ENCODE measurements at regions of chr1 and their contacts with region 1.

Region 1: GRCh38 chr1:63327417-63328139 is 5.2 kb downstream of the FOXD3 start:
- DNase-seq: peak; percentile 74
- H3K4me3 Mint-ChIP-seq: no peak overlapping the region
- H3K27ac Mint-ChIP-seq: no peak overlapping the region
- H3K4me1 Mint-ChIP-seq: peaks cover 26% of the 10 kb centered on the region
- H3K27me3 Mint-ChIP-seq: peaks cover 68% of the 10 kb centered on the region

Region 2: DNA sequence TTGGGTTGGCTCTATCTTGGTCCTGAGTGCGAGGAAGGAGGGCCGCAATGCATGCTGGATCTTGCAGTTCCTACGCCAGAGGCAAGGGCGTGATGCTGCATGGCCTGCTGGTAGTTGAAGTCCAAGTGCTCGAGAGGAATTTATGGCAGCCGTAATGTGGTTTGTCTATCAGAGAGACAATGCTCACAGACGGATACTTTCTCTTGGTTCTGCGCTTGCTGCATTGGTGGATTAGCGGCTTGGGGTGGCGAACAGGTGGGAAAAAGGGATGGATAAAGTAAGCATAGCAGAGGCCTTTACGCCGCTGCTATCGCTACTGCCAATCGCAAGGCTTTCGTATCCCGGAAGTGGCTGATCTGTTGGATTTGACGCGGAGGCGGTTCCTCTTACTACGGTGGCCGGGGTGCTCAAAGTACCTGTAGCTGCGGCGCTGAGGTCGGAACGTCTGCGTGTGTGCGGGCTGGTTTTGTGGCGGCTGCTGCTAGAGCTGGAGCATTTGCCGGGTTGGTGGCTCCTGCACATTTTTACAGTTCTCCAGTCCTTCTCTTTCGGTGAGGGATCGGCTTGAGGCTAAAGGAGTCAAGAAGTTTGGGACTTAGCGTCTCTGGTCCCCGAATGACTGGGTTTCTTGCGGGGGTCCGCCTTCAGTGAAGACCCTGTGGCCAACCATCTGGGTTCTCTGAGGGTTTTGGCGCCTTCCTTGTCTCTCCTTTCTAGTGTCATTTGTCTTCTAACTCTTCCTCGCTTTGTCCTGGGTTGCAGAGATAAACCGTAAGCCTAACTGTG is 543.7 kb before region 1 on chr1 and contains the start of gene ATG4C:
- CTCF ChIA-PET with region 1: no interaction called
- intact Hi-C with region 1: loop called (anchors 2 kb)
- DNase-seq: peak; percentile 96
- H3K4me3 Mint-ChIP-seq: no peak within 1 kb of the TSS
- H3K27ac Mint-ChIP-seq: no peak within 1 kb of the TSS
- H3K4me1 Mint-ChIP-seq: peaks cover 13% of the 10 kb centered on the region
- H3K27me3 Mint-ChIP-seq: peaks cover 7% of the 10 kb centered on the region
- total RNA-seq, gene ATG4C: 13.4 to 15.1 TPM

Region 3: GRCh38 chr1:62841587-62842169 is 485.9 kb before region 1 on chr1:
- CTCF ChIA-PET with region 1: no interaction called
- intact Hi-C with region 1: loop called (anchors 10 kb)
- DNase-seq: peak; percentile 7
- H3K4me3 Mint-ChIP-seq: no peak overlapping the region
- H3K27ac Mint-ChIP-seq: no peak overlapping the region
- H3K4me1 Mint-ChIP-seq: no peaks in the 10 kb centered on the region
- H3K27me3 Mint-ChIP-seq: no peaks in the 10 kb centered on the region

Region 4: GRCh38 chr1:63316984-63317816 is 10.4 kb before region 1 on chr1:
- CTCF ChIA-PET with region 1: interaction called, 12 read pairs
- intact Hi-C with region 1: loop called (anchors 1 kb)
- DNase-seq: peak; percentile 67
- H3K4me3 Mint-ChIP-seq: peak overlapping the region; percentile 63
- H3K27ac Mint-ChIP-seq: no peak overlapping the region
- H3K4me1 Mint-ChIP-seq: peaks cover 38% of the 10 kb centered on the region
- H3K27me3 Mint-ChIP-seq: peaks cover 69% of the 10 kb centered on the region

Region 5: DNA sequence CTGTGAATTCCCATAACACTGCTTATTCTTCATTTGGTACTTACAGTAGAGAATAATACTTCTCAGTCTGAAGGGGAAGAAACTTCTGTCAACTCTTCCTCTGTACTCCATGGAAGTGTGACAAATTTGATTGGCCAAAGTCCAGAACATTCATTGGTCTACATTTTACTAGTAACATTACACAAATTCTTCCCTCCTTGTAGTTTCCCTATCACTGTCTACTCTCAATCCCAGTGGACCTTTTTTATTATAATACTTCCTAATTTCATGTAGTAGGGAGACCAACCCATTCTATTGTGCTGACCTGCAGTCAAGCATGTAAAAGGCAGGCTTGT is 114.5 kb after region 1 on chr1:
- CTCF ChIA-PET with region 1: interaction called, 3 read pairs
- intact Hi-C with region 1: loop called (anchors 1 kb)
- DNase-seq: no peak
- H3K4me3 Mint-ChIP-seq: no peak overlapping the region
- H3K27ac Mint-ChIP-seq: no peak overlapping the region
- H3K4me1 Mint-ChIP-seq: no peaks in the 10 kb centered on the region
- H3K27me3 Mint-ChIP-seq: no peaks in the 10 kb centered on the region

Region 6: GRCh38 chr1:63480057-63480456 is 152.5 kb after region 1 on chr1:
- CTCF ChIA-PET with region 1: no interaction called
- intact Hi-C with region 1: no loop called
- DNase-seq: no peak
- H3K4me3 Mint-ChIP-seq: no peak overlapping the region
- H3K27ac Mint-ChIP-seq: no peak overlapping the region
- H3K4me1 Mint-ChIP-seq: no peaks in the 10 kb centered on the region
- H3K27me3 Mint-ChIP-seq: no peaks in the 10 kb centered on the region

Region 7: GRCh38 chr1:63537940-63538339 is 210.4 kb after region 1 on chr1:
- CTCF ChIA-PET with region 1: interaction called, 3 read pairs
- intact Hi-C with region 1: loop called (anchors 2 kb)
- DNase-seq: no peak
- H3K4me3 Mint-ChIP-seq: no peak overlapping the region
- H3K27ac Mint-ChIP-seq: no peak overlapping the region
- H3K4me1 Mint-ChIP-seq: no peaks in the 10 kb centered on the region
- H3K27me3 Mint-ChIP-seq: no peaks in the 10 kb centered on the region

Region 8: DNA sequence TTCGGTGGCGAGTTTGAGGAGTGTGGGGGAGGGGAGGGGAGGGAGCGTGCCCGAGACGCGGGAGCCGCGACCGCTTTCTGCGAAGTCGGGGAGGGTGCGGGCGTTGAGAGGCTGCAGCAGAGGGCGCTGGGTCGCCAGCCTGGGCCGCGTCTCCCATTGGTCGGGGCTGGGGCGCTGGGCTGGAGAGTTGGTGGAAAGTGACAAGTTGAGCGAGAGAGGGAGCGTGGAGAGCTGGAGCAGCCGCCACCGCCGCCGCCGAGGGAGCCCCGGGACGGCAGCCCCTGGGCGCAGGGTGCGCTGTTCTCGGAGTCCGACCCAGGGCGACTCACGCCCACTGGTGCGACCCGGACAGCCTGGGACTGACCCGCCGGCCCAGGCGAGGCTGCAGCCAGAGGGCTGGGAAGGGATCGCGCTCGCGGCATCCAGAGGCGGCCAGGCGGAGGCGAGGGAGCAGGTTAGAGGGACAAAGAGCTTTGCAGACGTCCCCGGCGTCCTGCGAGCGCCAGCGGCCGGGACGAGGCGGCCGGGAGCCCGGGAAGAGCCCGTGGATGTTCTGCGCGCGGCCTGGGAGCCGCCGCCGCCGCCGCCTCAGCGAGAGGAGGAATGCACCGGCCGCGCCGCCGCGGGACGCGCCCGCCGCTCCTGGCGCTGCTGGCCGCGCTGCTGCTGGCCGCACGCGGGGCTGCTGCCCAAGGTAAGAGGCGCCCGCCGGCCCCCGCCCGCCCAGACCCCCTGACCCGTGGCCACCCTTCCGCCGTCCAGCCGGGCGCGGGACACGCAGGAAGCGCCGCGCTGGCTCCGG is 446.4 kb after region 1 on chr1 and contains the start of gene ROR1:
- CTCF ChIA-PET with region 1: no interaction called
- intact Hi-C with region 1: loop called (anchors 10 kb)
- DNase-seq: peak; percentile 87
- H3K4me3 Mint-ChIP-seq: peak within 1 kb of the TSS; percentile 76
- H3K27ac Mint-ChIP-seq: no peak within 1 kb of the TSS
- H3K4me1 Mint-ChIP-seq: peaks cover 17% of the 10 kb centered on the region
- H3K27me3 Mint-ChIP-seq: peaks cover 52% of the 10 kb centered on the region
- total RNA-seq, gene ROR1: 0.10 to 0.14 TPM

Measured in activated naive CD4-positive, alpha-beta T cell treated with anti-CD3 and anti-CD28 coated beads for 36 hours (primary cell).